Activated CD4-positive, alpha-beta T cell treated with anti-CD3 and anti-CD28 coated beads, Interleukin-2, amount 10 ng/mL, durations not matched to agents 24 days and 14 days (primary cell): ENCODE measurements at regions of chr17 and their contacts with region 1.

Region 1: DNA sequence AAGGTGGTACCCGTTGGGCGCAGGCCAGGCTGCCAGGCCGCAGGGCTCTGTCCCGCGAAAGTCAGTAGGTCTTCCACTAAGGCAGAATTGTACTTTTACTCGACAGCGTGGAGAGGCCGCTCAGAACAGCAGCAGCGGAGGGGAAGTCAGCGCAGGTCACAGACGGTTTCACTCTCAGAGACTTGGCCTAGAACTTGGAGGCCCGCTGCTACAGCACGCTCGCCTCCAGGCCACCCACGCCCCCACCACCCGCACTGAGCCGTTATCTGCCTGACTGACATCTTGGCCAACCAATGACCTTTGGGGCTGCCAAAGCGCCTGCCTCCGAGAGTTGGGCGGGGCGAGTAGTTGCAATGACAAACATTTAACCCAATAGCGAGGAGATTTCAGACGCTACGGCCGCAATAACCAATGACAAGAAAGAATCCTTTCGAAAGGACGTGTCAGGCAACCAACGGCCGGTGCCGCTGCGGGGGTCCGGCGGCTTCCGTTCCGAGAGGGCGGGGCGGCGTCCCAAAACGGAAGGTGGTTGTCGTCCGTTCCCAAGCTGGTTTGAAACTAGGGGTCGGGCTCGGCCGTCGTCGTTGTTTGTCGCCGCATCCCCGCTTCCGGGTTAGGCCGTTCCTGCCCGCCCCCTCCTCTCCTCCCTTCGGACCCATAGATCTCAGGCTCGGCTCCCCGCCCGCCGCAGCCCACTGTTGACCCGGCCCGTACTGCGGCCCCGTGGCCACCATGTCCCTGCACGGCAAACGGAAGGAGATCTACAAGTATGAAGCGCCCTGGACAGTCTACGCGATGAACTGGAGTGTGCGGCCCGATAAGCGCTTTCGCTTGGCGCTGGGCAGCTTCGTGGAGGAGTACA is at the start of gene DCAF7:
- DNase-seq: peak; percentile 100
- H3K4me3 Mint-ChIP-seq: peak within 1 kb of the TSS; percentile 87
- H3K27ac Mint-ChIP-seq: peak within 1 kb of the TSS; percentile 93
- H3K4me1 Mint-ChIP-seq: peaks cover 35% of the 10 kb centered on the region
- H3K27me3 Mint-ChIP-seq: no peaks in the 10 kb centered on the region
- total RNA-seq, gene DCAF7: 113 and 115 TPM in 2 replicates

Region 2: GRCh38 chr17:63445979-63446691 is 104.0 kb before region 1 on chr17 and contains the start of gene CYB561:
- intact Hi-C with region 1: loop called (anchors 5 kb)
- DNase-seq: peak; percentile 92
- H3K4me3 Mint-ChIP-seq: peak within 1 kb of the TSS; percentile 70
- H3K27ac Mint-ChIP-seq: peak within 1 kb of the TSS; percentile 59
- H3K4me1 Mint-ChIP-seq: peaks cover 26% of the 10 kb centered on the region
- H3K27me3 Mint-ChIP-seq: peaks cover 16% of the 10 kb centered on the region
- total RNA-seq, gene CYB561: 1.7 and 2.0 TPM in 2 replicates

Region 3: GRCh38 chr17:63600569-63601438 is 50.6 kb after region 1 on chr17 and contains the start of gene TACO1:
- intact Hi-C with region 1: loop called (anchors 1 kb)
- DNase-seq: peak; percentile 94
- H3K4me3 Mint-ChIP-seq: peak within 1 kb of the TSS; percentile 91
- H3K27ac Mint-ChIP-seq: peak within 1 kb of the TSS; percentile 90
- H3K4me1 Mint-ChIP-seq: peaks cover 17% of the 10 kb centered on the region
- H3K27me3 Mint-ChIP-seq: no peaks in the 10 kb centered on the region
- total RNA-seq, gene TACO1: 27.4 and 27.9 TPM in 2 replicates

Region 4: DNA sequence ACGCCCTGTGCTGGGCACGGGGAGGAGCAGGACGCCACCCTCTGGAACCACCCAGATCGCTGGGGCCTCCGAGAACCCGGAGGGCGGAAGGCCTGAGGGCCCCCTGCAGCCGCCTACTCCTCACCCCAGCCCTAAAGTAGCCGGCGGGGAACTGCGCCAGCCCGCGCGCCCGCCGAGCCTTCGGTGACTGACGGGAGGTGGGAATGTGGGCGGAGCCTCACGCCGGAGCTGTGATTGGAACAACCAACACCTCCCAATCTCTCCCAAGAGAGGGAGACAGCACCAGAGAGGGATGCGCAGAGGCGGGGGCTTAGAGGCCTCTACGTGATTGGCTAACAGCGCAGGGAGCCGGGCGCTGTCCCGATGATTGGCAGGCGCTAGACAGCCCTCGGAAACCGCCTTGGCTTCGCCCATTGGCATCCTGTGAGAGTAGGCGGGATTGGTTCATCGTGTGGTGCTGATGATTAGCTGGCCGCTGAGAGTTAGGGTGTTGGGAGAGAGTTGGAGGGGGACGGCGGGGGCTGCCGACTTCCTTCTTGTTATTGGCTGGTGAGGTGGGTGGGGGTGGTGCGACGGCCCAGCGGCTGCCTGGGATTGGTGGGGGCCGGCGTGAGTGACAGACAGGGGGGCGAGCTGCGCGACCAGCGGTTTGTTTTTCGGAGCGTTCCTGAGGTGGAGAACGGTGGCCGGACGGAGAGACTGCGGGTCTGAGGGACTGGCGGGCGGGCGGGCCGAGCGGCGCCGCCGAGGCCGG is 71.8 kb after region 1 on chr17 and contains the start of gene MAP3K3:
- intact Hi-C with region 1: loop called (anchors 1 kb)
- DNase-seq: peak; percentile 99
- H3K4me3 Mint-ChIP-seq: peak within 1 kb of the TSS; percentile 99
- H3K27ac Mint-ChIP-seq: peak within 1 kb of the TSS; percentile 96
- H3K4me1 Mint-ChIP-seq: peaks cover 30% of the 10 kb centered on the region
- H3K27me3 Mint-ChIP-seq: peaks cover 11% of the 10 kb centered on the region
- total RNA-seq, gene MAP3K3: 26.2 and 26.7 TPM in 2 replicates

Region 5: DNA sequence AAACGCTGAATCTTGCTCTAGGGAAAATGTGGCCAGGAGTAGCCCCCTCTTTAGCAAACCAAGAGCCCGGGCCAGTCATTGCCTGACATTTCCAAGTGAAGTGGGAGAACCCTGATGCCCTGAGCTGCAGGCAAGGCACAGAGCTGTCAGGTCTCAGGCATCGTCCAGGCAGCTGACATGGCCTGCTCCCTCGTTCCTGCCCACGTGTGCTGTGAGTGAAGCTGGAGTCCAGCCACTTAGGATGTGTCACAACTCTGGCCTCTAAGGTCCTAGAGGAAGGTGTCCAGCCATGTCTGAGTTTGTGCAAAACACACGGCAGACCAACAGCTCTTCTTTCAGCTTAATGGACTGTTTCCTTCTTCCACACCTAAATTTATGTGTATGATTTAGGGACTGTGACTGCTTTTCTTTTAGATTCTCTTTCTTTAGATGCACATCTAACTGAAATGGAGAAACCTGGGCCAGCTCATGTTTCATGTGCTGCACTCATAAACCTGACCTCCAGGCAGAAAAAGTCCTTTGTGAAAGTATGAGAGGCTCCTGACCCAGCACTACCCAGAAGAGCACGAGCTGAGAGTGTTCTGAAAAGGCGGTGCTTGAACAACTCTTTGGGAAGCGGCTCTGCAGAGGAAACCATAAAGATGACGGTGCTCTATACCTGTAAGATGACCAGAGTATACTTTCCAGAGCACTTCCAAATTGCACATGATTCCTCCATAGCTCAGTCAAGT is 164.5 kb after region 1 on chr17:
- intact Hi-C with region 1: no loop called
- DNase-seq: no peak
- H3K4me3 Mint-ChIP-seq: no peak overlapping the region
- H3K27ac Mint-ChIP-seq: no peak overlapping the region
- H3K4me1 Mint-ChIP-seq: peaks cover 9% of the 10 kb centered on the region
- H3K27me3 Mint-ChIP-seq: no peaks in the 10 kb centered on the region

Region 6: GRCh38 chr17:63827002-63827771 is 277.0 kb after region 1 on chr17 and contains the starts of genes FTSJ3 and PSMC5:
- intact Hi-C with region 1: loop called (anchors 5 kb)
- DNase-seq: peak; percentile 99
- H3K4me3 Mint-ChIP-seq: peak within 1 kb of the TSS; percentile 99
- H3K27ac Mint-ChIP-seq: peak within 1 kb of the TSS; percentile 99
- H3K4me1 Mint-ChIP-seq: peaks cover 63% of the 10 kb centered on the region
- H3K27me3 Mint-ChIP-seq: no peaks in the 10 kb centered on the region
- total RNA-seq, gene FTSJ3: 99.6 and 100 TPM in 2 replicates
- total RNA-seq, gene PSMC5: 189 and 199 TPM in 2 replicates